ENCODE measurements at regions of chr3 and their contacts with region 1.

Region 1: DNA sequence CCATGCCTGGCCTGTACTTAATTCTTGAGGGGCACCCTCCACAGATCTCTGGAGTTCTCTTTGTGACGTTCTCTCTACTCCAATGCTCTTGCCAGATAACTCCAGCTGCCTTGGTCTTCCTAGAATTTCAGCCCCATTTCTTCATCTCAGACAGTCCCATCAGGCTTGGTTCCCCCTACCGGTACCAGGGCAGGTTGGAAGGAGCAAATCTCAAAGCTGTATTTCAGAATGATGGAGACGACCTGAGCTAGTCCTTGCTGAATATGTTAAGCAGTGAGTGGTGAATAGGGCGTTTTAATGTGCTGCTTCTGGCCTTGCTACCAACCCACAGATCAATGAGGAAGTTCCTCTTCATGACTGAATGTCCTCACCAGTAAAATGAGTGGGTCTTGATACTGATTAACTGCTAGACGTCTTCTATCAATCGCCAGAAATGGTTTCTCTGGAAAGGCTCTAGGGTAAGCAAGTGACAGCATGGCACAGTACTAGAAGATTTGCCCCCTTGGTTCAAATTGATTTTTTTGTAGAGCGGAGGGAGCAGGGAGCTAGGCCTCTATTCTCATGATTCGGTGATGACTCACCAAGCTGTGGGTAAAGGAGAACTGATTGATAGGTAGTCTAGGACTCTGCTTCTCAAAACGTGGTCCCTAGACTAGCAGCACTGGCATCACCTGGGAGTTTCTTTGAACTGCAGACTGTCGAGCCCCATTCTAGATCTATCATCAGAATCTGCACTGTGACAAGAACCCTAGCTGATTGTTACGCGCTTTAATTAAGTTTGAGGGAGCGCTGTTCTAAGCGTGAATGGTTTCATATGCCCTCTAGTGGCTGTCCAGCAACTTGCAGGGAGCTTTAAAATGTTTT is 67.8 kb downstream of the UBP1 start:
- DNase-seq: no peak
- H3K4me3 ChIP-seq: no peak overlapping the region
- H3K27ac ChIP-seq: no peak overlapping the region
- H3K4me1 ChIP-seq: peaks cover 0 to 10% (median 4%) of the 10 kb centered on the region in 4 donors
- H3K27me3 ChIP-seq: no peaks in the 10 kb centered on the region
- CTCF ChIP-seq: peak; percentile 89 to 96 (median 89)
- EP300 ChIP-seq: no peak
- POLR2A ChIP-seq: no peak

Region 2: GRCh38 chr3:32947789-32948238 is 424.6 kb before region 1 on chr3:
- intact Hi-C with region 1: loop called (anchors 10 kb)
- DNase-seq: peak; percentile 95
- H3K4me3 ChIP-seq: no peak overlapping the region
- H3K27ac ChIP-seq: no peak overlapping the region
- H3K4me1 ChIP-seq: no peaks in the 10 kb centered on the region
- H3K27me3 ChIP-seq: no peaks in the 10 kb centered on the region
- CTCF ChIP-seq: peak; percentile 56 to 64 (median 63)
- EP300 ChIP-seq: no peak
- POLR2A ChIP-seq: no peak

Region 3: GRCh38 chr3:32960404-32961170 is 411.9 kb before region 1 on chr3:
- intact Hi-C with region 1: no loop called
- DNase-seq: peak; percentile 7
- H3K4me3 ChIP-seq: no peak overlapping the region
- H3K27ac ChIP-seq: no peak overlapping the region
- H3K4me1 ChIP-seq: peaks cover 0 to 5% (median 0%) of the 10 kb centered on the region in 4 donors
- H3K27me3 ChIP-seq: no peaks in the 10 kb centered on the region
- CTCF ChIP-seq: no peak
- EP300 ChIP-seq: no peak
- POLR2A ChIP-seq: no peak

Region 4: DNA sequence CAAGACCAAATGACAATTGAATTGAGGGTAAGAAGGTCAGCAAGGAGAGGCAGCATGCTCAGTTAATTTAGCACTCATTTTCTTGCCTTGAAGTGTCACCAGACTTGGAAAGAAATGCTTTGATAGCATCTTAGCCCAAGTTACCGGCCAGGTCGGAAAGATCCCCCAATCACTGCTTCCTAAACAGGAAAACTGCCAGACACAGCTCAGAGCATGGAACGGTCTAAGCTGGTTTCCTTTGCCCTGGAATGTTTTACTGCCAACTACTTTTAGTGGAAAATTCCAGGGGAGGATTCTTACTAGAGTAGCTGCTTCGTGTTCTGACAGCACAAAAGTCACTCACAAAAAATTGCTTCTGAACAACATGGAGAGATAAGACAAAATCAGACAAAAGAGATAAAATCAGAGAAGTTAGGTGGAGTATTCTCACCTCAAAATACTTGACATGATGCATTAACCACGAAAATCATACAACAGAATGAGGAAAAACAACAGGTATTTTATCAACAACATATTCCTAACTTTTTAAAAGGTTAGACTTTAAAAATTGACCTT is 355.5 kb before region 1 on chr3:
- intact Hi-C with region 1: no loop called
- DNase-seq: no peak
- H3K4me3 ChIP-seq: no peak overlapping the region
- H3K27ac ChIP-seq: no peak overlapping the region
- H3K4me1 ChIP-seq: no peaks in the 10 kb centered on the region
- H3K27me3 ChIP-seq: no peaks in the 10 kb centered on the region
- CTCF ChIP-seq: no peak
- EP300 ChIP-seq: no peak
- POLR2A ChIP-seq: no peak

Region 5: DNA sequence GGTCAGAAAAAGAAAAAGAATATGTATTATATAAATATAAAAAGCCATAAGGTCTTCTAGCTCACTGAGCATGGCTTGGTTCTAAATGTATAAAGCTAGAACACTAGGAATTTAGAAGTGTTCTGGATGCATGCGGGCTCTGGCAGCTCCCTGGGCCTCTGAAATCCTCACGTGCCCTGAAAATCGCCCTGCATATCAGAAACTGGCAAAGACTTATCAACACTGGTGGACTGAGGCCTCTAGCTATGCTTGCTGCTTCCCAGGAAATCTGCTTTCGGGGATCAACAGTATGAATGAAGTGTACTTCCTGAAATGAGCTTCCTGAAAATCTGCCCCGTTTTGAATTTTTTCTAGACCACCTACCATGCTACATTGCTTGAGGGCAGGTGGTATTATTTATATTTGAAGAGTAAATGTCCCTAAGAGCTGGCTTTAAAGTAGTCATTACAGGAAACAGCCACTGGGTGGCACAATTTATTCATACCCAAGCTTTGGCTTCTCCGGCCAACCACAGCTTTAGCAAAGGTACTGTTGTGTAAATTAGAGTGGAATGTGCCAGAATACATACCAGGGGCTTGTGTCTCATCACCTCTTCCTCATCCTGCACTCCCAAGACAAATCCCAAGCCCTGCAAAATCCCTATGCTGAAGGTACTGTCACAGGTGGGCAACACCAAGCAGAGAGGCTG is 241.0 kb before region 1 on chr3:
- intact Hi-C with region 1: loop called (anchors 1 kb)
- DNase-seq: no peak
- H3K4me3 ChIP-seq: no peak overlapping the region
- H3K27ac ChIP-seq: no peak overlapping the region
- H3K4me1 ChIP-seq: peaks cover 0 to 5% (median 4%) of the 10 kb centered on the region in 4 donors
- H3K27me3 ChIP-seq: no peaks in the 10 kb centered on the region
- CTCF ChIP-seq: peak; percentile 67 to 79 (median 73)
- EP300 ChIP-seq: no peak
- POLR2A ChIP-seq: no peak